Right cardiac atrium (tissue), 5 donors: ENCODE measurements at regions of chr16 and their contacts with region 1.

Region 1: GRCh38 chr16:67415872-67416793 is at the start of gene ZDHHC1:
- DNase-seq: peak; percentile 81 to 93 (median 92)
- ATAC-seq: peak; percentile 97
- H3K4me3 ChIP-seq: peak within 1 kb of the TSS; percentile 62
- H3K27ac ChIP-seq: peak within 1 kb of the TSS; percentile 76
- H3K4me1 ChIP-seq: no peaks in the 10 kb centered on the region
- H3K27me3 ChIP-seq: no peaks in the 10 kb centered on the region
- total RNA-seq, gene ZDHHC1: 6.4 to 10.4 (median 6.4) TPM

Region 2: GRCh38 chr16:67000384-67001351 is 415.5 kb before region 1 on chr16:
- intact Hi-C with region 1: loop called in 1 of 4 experiments (anchors 10 kb)
- DNase-seq: peak; percentile 51 to 81 (median 79)
- ATAC-seq: peak; percentile 53 to 69
- H3K4me3 ChIP-seq: peak overlapping the region; percentile 51
- H3K27ac ChIP-seq: no peak overlapping the region
- H3K4me1 ChIP-seq: peaks cover 2% of the 10 kb centered on the region
- H3K27me3 ChIP-seq: no peaks in the 10 kb centered on the region

Region 3: DNA sequence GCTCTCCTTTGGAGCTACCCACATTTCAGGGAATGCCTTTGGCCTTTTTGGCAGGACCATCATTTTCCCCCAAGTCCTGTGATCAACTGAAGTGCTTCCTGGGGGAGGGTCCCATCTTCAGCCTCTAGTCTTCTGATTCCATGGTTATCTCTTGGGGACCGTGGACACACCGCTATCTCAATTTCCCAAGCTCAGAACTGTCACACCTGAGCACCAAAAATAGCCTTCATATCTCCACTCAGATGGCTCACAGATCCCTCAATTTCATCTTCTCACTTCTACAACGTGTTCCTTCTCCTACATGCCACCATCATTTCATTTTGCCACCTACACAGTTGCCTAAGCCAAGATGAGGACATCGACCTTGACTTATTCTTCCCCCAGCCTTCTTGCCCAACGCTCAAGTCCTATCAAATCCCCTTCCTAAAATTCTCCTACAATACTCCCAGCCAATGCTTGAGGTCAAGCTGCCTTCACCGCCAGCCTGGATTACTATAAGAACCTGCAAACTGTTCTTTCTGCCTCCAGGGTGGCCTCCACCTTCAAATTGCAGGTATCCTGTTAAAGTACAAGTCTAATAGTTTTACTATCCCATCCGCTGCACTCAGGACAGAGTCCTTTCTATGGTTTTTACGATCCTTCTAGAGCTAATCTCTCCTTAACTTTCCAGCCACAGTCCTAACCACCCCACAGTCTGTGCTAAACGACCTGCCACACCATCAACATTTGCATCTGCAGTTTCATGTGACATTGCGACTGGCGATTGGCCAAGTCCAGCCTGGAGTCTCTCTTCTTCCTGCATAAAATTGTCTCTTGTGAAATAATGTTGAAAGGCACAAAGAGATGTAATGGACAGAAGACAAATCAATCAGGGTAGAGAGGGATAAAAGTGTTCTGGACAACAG is 58.7 kb after region 1 on chr16:
- intact Hi-C with region 1: no loop called
- DNase-seq: peak in 1 of 3 donors; percentile 61
- ATAC-seq: no peak
- H3K4me3 ChIP-seq: no peak overlapping the region
- H3K27ac ChIP-seq: no peak overlapping the region
- H3K4me1 ChIP-seq: peaks cover 11% of the 10 kb centered on the region
- H3K27me3 ChIP-seq: no peaks in the 10 kb centered on the region

Region 4: GRCh38 chr16:67708368-67708861 is 292.3 kb after region 1 on chr16:
- intact Hi-C with region 1: no loop called
- DNase-seq: no peak
- ATAC-seq: peak; percentile 61 to 66
- H3K4me3 ChIP-seq: no peak overlapping the region
- H3K27ac ChIP-seq: no peak overlapping the region
- H3K4me1 ChIP-seq: peaks cover 8% of the 10 kb centered on the region
- H3K27me3 ChIP-seq: no peaks in the 10 kb centered on the region